Head of caudate nucleus (tissue), 42 donors: ENCODE measurements at regions of chr1 and their contacts with region 1.

Region 1: GRCh38 chr1:244451951-244452795 is 464 bp upstream of the ADSS2 start:
- DNase-seq: peak; percentile 96 to 100 (median 99)

Region 2: DNA sequence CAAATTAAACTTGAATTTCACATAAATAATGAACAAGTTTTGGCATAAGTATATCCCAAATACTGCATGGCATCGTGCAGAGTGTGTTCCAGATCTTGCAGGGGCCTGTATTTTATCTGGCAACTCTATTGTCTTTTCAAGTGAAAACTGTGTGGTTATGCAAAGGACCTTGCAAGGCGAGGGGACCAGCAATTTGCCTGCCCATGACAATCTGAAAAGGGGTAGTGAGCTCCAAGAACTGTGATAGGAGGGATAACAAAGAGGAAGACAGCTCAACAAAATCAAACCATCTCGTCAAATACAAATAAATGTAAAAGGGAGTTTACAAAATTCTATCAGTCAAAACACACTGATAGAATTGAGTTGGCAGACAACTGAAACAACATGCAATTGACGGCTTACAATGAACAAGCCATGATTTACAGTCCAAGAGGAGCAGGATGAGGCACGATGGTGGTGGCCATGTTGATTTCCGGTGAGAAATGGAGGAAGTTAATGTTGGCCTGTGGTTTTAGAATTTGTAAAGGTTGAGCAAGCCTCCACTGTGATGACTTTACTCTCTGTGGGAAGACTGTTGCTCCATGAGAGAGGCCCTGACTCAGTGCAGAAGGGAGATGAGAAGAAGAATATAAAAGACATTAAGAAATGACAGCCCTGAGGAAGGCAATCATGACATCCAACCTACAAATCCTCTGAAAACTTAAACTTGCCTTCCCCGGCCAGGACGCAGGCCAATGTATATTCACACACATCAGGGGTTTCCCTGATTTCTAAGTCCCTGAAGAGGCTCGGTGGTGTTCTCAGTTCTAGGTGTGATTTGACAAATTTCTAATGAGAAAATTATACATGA is 132.7 kb before region 1 on chr1:
- intact Hi-C with region 1: loop called (anchors 10 kb)
- DNase-seq: peak in 3 of 42 donors; percentile 34 to 40 (median 37)

Region 3: GRCh38 chr1:244341455-244342450 is 110.4 kb before region 1 on chr1:
- intact Hi-C with region 1: loop called (anchors 10 kb)
- DNase-seq: peak in 41 of 42 donors; percentile 16 to 81 (median 56)

Region 4: DNA sequence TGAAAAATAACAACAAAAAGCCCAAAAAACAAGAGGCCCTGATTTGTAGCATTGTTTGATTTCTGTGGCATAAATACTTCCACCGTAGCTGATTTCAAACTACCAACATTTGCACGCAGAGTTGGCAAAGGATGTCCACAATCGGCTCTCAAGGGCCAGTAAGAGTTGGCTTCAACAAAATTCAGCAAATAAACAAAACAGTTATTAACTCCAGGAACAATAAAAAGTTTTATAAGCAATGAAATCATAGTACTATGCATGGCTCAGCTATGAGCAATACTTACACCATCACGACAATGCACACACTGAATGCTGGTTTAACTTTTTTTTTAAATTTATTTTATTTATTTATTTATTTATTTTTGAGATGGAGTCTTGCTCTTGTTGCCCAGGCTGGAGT is 374.5 kb after region 1 on chr1:
- intact Hi-C with region 1: no loop called
- DNase-seq: no peak